CD8-positive, alpha-beta memory T cell (primary cell): ENCODE measurements at regions of chr22 and their contacts with region 1.

Region 1: GRCh38 chr22:21629262-21630149 is at the start of gene YDJC:
- DNase-seq: peak; percentile 91 to 95 (median 93)
- H3K4me3 ChIP-seq: peak within 1 kb of the TSS; percentile 90
- H3K4me3 Mint-ChIP-seq: peak within 1 kb of the TSS; percentile 92 to 99 (median 94)
- H3K27ac ChIP-seq: peak within 1 kb of the TSS; percentile 98
- H3K27ac Mint-ChIP-seq: peak within 1 kb of the TSS; percentile 88 to 96 (median 92)
- H3K4me1 ChIP-seq: peaks cover 48% of the 10 kb centered on the region
- H3K4me1 Mint-ChIP-seq: peaks cover 32 to 56% (median 38%) of the 10 kb centered on the region in 3 donors
- H3K27me3 ChIP-seq: no peaks in the 10 kb centered on the region
- H3K27me3 Mint-ChIP-seq: no peaks in the 10 kb centered on the region
- total RNA-seq, gene YDJC: 75.2 to 79.0 TPM

Region 2: GRCh38 chr22:21666786-21667185 is 37.3 kb after region 1 on chr22:
- CTCF ChIA-PET with region 1: interaction called, 13 read pairs
- POLR2A ChIA-PET with region 1: no interaction called
- DNase-seq: no peak
- H3K4me3 ChIP-seq: peak overlapping the region; percentile 94
- H3K4me3 Mint-ChIP-seq: peak overlapping the region; percentile 98 to 100 (median 99)
- H3K27ac ChIP-seq: peak overlapping the region; percentile 92
- H3K27ac Mint-ChIP-seq: peak overlapping the region in 6 of 8 donors; percentile 79 to 99 (median 92)
- H3K4me1 ChIP-seq: peaks cover 15% of the 10 kb centered on the region
- H3K4me1 Mint-ChIP-seq: peaks cover 27 to 49% (median 37%) of the 10 kb centered on the region in 3 donors
- H3K27me3 ChIP-seq: no peaks in the 10 kb centered on the region
- H3K27me3 Mint-ChIP-seq: no peaks in the 10 kb centered on the region